CD8-positive, alpha-beta memory T cell (primary cell): ENCODE measurements at regions of chr7 and their contacts with region 1.

Region 1: DNA sequence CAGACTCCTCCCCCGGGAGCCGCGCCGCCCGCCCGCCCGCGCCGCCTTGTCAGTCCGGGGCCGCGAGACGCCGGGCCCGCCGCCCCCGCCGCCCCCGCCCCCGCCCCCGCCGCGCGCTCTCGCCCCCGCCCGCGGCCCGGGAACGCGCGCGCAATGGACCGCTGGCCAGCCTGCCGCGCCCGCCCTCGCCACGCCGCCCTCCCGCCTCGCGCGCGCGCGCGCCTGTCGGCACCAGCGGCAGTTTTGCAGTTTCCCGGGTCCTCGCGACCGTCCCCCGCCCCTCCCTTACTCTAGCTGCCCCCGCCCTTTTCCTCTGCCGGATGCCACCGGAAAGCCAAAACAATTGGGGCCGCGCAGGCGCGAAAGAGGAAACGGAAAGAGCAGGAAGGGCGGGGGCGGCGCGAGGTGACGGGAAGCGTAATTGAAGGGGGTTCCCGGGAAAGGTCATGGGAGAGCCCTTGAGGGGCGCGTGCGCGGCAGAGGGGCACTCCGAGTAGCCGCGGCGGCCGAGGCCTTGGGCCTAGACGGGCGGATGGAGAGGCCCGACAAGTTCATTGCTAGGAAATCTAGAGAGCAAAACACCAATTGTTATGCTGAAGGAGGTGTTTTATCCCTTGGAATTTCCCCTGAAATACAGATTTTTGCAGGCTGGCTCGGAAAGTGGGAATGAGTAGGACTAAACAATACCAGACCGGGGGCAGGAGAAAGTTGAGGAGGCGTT is 400 bp upstream of the KBTBD2 start:
- DNase-seq: peak; percentile 97 to 99 (median 98)
- H3K4me3 ChIP-seq: peak overlapping the region; percentile 90
- H3K4me3 Mint-ChIP-seq: peak overlapping the region; percentile 91 to 99 (median 95)
- H3K27ac ChIP-seq: peak overlapping the region; percentile 100
- H3K27ac Mint-ChIP-seq: peak overlapping the region; percentile 97 to 100 (median 99)
- H3K4me1 ChIP-seq: peaks cover 44% of the 10 kb centered on the region
- H3K4me1 Mint-ChIP-seq: peaks cover 39 to 53% (median 51%) of the 10 kb centered on the region in 3 donors
- H3K27me3 ChIP-seq: no peaks in the 10 kb centered on the region
- H3K27me3 Mint-ChIP-seq: peaks cover 1 to 5% of the 10 kb centered on the region in 2 donors

Region 2: DNA sequence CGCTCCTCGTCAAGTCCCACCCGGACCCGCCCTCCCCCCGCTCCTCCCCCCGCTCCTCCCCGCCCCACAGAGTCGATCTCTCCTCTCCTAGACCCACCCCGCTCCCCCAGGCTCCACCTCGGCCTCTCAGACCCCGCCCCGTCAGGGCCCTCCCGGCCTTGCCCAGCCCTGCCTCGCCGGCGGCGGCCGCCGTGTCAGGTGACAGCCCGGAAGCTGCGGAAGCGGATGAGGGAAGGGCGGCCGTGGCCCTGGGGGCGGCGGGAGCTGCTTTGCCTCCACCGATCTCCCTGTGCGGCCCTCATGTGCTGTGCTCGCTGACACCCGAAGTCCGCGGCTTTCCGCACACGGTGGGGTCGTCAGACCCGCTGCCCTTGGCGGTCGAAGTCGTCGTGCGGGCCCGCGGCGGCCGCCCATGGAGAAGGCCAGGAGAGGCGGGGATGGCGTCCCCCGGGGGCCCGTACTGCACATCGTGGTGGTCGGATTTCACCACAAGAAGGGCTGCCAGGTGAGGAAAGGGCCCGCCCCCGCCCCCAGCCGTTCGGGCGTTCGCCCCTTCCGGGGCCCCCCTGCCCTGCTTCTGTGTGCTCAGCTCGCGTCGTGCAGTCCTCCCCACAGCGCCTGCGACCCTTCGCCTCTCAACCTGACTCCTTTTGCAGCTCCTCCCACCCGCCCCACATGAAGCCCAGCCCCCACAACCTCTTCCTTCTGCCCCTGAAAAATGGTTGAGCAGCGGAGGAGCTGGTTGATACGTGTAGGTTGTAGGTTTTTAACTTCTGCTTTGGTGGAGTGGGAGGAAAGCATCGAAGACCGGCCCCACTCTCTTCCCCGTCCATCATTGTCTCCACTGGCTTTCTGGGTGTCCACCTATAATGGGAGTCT is 396.4 kb before region 1 on chr7 and contains the start of gene AVL9:
- CTCF ChIA-PET with region 1: no interaction called
- POLR2A ChIA-PET with region 1: interaction called, 10 read pairs
- DNase-seq: peak; percentile 99
- H3K4me3 ChIP-seq: peak within 1 kb of the TSS; percentile 91
- H3K4me3 Mint-ChIP-seq: peak within 1 kb of the TSS; percentile 86 to 96 (median 95)
- H3K27ac ChIP-seq: peak within 1 kb of the TSS; percentile 96
- H3K27ac Mint-ChIP-seq: peak within 1 kb of the TSS; percentile 82 to 98 (median 97)
- H3K4me1 ChIP-seq: peaks cover 31% of the 10 kb centered on the region
- H3K4me1 Mint-ChIP-seq: peaks cover 30 to 57% (median 44%) of the 10 kb centered on the region in 3 donors
- H3K27me3 ChIP-seq: no peaks in the 10 kb centered on the region
- H3K27me3 Mint-ChIP-seq: no peaks in the 10 kb centered on the region
- total RNA-seq, gene AVL9: 49.6 to 57.0 TPM

Region 3: DNA sequence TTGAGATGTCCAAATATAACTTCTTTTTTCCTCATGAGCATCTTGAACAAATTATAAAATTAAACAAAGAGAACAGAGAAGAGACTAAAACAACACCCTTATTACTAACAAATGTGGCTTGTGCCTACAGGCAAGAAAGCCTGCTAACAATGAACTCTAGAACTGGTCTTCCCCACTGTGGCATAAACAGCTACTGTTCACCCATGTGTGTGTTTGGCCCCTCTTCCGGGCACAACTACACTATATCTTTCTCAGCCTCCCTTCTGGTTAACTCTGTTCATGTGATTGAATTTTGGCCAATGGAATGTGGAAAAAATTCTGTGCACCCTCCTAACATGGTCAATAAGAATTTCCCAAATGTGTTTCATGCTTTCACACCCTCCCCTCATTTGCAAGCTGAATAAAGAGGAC is 117.4 kb before region 1 on chr7:
- CTCF ChIA-PET with region 1: no interaction called
- POLR2A ChIA-PET with region 1: no interaction called
- DNase-seq: no peak
- H3K4me3 ChIP-seq: no peak overlapping the region
- H3K4me3 Mint-ChIP-seq: no peak overlapping the region
- H3K27ac ChIP-seq: no peak overlapping the region
- H3K27ac Mint-ChIP-seq: no peak overlapping the region
- H3K4me1 ChIP-seq: no peaks in the 10 kb centered on the region
- H3K4me1 Mint-ChIP-seq: no peaks in the 10 kb centered on the region
- H3K27me3 ChIP-seq: no peaks in the 10 kb centered on the region
- H3K27me3 Mint-ChIP-seq: peaks cover 7 to 22% of the 10 kb centered on the region in 2 donors

Region 4: GRCh38 chr7:32846701-32847100 is 45.3 kb before region 1 on chr7:
- CTCF ChIA-PET with region 1: interaction called, 62 read pairs
- POLR2A ChIA-PET with region 1: interaction called, 7 read pairs
- DNase-seq: peak; percentile 83 to 92 (median 84)
- H3K4me3 ChIP-seq: no peak overlapping the region
- H3K4me3 Mint-ChIP-seq: peak overlapping the region in 3 of 7 donors; percentile 16 to 48 (median 48)
- H3K27ac ChIP-seq: no peak overlapping the region
- H3K27ac Mint-ChIP-seq: peak overlapping the region in 5 of 8 donors; percentile 1 to 88 (median 43)
- H3K4me1 ChIP-seq: no peaks in the 10 kb centered on the region
- H3K4me1 Mint-ChIP-seq: peaks cover 4 to 10% (median 7%) of the 10 kb centered on the region in 3 donors
- H3K27me3 ChIP-seq: peaks cover 6% of the 10 kb centered on the region
- H3K27me3 Mint-ChIP-seq: peaks cover 8 to 44% of the 10 kb centered on the region in 2 donors

Region 5: GRCh38 chr7:32905175-32905662 is 13.3 kb after region 1 on chr7:
- CTCF ChIA-PET with region 1: interaction called, 9 read pairs
- POLR2A ChIA-PET with region 1: interaction called, 31 read pairs
- DNase-seq: peak; percentile 56 to 85 (median 79)
- H3K4me3 ChIP-seq: peak overlapping the region; percentile 58
- H3K4me3 Mint-ChIP-seq: peak overlapping the region; percentile 71 to 90 (median 85)
- H3K27ac ChIP-seq: peak overlapping the region; percentile 84
- H3K27ac Mint-ChIP-seq: peak overlapping the region; percentile 85 to 97 (median 94)
- H3K4me1 ChIP-seq: peaks cover 12% of the 10 kb centered on the region
- H3K4me1 Mint-ChIP-seq: peaks cover 9 to 19% (median 14%) of the 10 kb centered on the region in 3 donors
- H3K27me3 ChIP-seq: no peaks in the 10 kb centered on the region
- H3K27me3 Mint-ChIP-seq: no peaks in the 10 kb centered on the region

Region 6: DNA sequence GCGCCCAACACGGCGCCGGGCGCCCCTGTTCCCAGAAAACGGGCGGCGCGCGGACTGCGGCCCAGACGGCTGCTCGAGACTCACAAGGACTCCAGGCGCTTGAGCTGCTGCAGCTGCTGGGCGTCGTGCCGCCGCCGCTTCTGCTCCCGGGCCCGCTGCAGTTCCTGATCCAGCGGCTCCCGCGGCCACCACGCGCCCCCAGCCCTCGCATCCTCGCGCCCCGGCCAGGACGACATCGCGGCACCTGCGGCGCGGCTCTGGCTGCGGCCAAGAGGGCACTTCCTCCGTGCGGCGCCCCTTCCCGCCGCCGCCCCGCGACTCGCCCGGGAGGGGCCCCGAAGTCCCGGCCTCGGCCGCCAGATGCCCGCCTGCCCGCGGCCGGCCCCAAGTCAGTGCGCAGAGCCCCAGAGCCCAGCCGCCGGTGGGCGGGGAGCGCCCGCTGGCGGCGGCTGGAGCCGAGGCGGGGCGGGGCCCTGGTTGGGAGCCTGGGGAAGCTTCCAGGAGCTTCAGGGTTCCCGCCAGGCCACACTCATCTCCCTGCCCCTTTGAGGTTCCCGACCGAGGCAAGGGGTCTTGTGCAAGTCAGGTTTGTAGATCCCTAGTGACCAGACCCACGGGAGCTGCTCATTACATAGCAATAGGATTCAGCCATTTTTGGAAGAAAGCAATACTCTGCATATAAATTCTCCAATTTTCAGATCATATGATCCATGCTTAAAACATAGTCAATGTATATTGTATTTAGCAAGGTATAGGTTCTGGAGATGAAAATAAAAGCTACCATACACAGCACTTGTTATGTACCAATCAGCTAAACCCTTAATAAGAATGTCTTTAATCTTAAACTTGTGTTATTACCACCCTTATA is 51.1 kb after region 1 on chr7:
- CTCF ChIA-PET with region 1: interaction called, 36 read pairs
- POLR2A ChIA-PET with region 1: interaction called, 5 read pairs
- DNase-seq: peak; percentile 57 to 69 (median 60)
- H3K4me3 ChIP-seq: peak overlapping the region; percentile 50
- H3K4me3 Mint-ChIP-seq: peak overlapping the region; percentile 72 to 90 (median 80)
- H3K27ac ChIP-seq: peak overlapping the region; percentile 46
- H3K27ac Mint-ChIP-seq: peak overlapping the region in 1 of 8 donors; percentile 84
- H3K4me1 ChIP-seq: peaks cover 10% of the 10 kb centered on the region
- H3K4me1 Mint-ChIP-seq: peaks cover 7 to 20% (median 12%) of the 10 kb centered on the region in 3 donors
- H3K27me3 ChIP-seq: no peaks in the 10 kb centered on the region
- H3K27me3 Mint-ChIP-seq: peaks cover 3 to 12% of the 10 kb centered on the region in 2 donors

Region 7: DNA sequence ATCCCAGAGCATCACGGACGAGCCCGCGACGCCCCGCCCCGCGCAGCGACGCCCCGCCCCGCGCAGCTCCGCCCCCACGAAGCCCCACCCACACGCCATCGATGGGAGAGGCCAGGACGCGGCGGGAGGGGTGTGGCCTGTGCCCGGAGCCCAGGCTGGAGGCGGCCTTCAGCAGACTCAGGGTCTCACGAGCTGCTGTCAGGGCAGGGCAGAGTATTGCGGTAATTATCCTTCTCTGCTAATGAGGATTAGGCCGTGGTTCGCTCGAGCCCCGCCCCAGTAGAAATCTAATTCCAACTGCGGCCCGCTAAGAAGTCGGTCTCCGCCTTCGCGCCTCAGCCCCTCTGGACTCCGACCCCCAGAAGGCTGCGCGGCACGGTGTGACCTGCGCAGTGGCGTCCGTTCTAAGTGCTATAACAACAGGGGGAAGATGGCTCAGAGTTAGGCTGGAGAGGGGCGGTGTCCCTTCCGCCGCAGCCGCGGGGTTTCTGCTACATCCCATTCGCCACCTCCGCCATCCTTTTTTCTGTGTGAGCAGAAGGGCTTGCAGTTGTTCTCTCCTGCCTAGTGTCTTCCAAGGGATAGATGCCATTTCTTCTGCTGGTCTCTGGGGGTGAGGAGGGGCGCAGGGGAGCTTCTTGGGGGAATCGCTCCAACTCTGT is 171.0 kb after region 1 on chr7:
- CTCF ChIA-PET with region 1: interaction called, 3 read pairs
- POLR2A ChIA-PET with region 1: interaction called, 13 read pairs
- DNase-seq: peak; percentile 87 to 95 (median 94)
- H3K4me3 ChIP-seq: peak overlapping the region; percentile 82
- H3K4me3 Mint-ChIP-seq: peak overlapping the region; percentile 87 to 98 (median 95)
- H3K27ac ChIP-seq: peak overlapping the region; percentile 77
- H3K27ac Mint-ChIP-seq: peak overlapping the region; percentile 85 to 99 (median 96)
- H3K4me1 ChIP-seq: peaks cover 30% of the 10 kb centered on the region
- H3K4me1 Mint-ChIP-seq: peaks cover 39 to 49% (median 48%) of the 10 kb centered on the region in 3 donors
- H3K27me3 ChIP-seq: no peaks in the 10 kb centered on the region
- H3K27me3 Mint-ChIP-seq: peaks cover 1 to 9% of the 10 kb centered on the region in 2 donors

Region 8: DNA sequence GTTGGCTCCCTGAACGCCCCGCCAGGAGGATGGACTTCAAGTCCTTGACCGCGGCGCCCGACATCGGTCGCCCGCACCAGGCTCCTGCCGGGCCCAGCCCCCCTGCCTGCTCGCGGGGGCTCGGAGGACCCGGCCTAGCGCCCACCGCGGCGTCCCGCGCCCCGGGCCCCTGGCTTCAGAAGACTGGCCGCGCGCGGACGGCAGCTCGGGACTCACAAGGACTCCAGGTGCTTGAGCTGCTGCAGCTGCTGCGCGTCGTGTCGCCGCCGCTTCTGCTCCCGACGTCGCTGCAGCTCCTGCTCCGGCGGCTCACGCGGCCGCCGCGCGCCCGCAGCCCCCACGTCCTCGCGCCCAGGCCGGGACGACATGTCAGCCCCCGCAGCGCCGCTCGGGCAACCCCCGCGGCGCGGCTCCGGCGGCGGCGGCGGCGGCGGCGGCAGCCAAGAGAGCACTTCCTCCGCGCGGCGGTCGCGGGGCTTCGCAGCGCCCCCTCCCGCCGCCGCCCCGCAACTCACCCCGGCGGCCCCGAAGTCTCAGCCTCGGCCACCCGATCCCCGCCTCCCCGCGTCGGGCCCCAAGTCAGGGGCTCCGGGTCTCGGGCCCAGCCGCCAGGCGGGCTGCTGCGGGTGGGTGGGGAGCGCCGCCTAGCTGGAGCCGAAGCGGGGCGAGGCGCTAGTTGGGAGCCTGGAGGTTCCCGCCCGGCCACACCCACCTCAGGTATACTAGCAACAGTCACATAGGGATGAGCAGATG is 217.2 kb after region 1 on chr7 and contains the start of gene RP9:
- CTCF ChIA-PET with region 1: interaction called, 14 read pairs
- POLR2A ChIA-PET with region 1: interaction called, 3 read pairs
- DNase-seq: peak; percentile 66 to 82 (median 78)
- H3K4me3 ChIP-seq: peak within 1 kb of the TSS; percentile 82
- H3K4me3 Mint-ChIP-seq: peak within 1 kb of the TSS; percentile 76 to 92 (median 84)
- H3K27ac ChIP-seq: peak within 1 kb of the TSS; percentile 74
- H3K27ac Mint-ChIP-seq: peak within 1 kb of the TSS; percentile 34 to 92 (median 83)
- H3K4me1 ChIP-seq: peaks cover 26% of the 10 kb centered on the region
- H3K4me1 Mint-ChIP-seq: peaks cover 32 to 55% (median 50%) of the 10 kb centered on the region in 3 donors
- H3K27me3 ChIP-seq: no peaks in the 10 kb centered on the region
- H3K27me3 Mint-ChIP-seq: peaks cover 3 to 14% of the 10 kb centered on the region in 2 donors
- total RNA-seq, gene RP9: 26.0 to 27.7 TPM